Sciatic nerve (tissue), 2 donors: ENCODE measurements at regions of chr18 and their contacts with region 1.

Region 1: DNA sequence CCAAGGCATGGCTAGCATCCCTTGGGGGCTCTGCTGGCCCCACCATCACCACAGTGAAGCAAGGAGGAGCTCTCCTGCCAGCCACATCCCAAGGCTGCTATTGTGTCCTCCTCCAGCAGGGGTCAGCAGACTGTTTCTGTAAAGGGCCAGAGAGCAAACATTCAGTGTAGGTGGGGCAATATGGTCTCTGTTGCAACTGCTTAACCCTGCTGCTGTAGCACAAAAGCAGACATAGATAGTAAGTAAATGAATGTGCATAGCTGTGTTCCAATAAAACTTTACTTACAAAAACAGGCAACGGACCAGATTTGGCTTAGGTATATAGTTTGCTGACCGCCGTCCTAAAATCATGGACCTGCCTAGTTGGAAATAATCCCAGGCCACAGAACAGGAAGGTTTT is 36.4 kb upstream of the ZBTB7C start:
- DNase-seq: peak; percentile 83
- ATAC-seq: peak; percentile 54

Region 2: GRCh38 chr18:48022531-48023329 is 422.8 kb before region 1 on chr18:
- intact Hi-C with region 1: loop called (anchors 10 kb)
- DNase-seq: no peak
- ATAC-seq: peak; percentile 51